ENCODE measurements at regions of chr16 and their contacts with region 1.

Region 1: GRCh38 chr16:52843381-52843780 is 209.3 kb downstream of the CHD9NB start:
- DNase-seq: no peak
- ATAC-seq: no peak
- H3K4me3 ChIP-seq: no peak overlapping the region
- H3K27ac ChIP-seq: no peak overlapping the region
- H3K4me1 ChIP-seq: no peaks in the 10 kb centered on the region
- H3K27me3 ChIP-seq: no peaks in the 10 kb centered on the region
- CTCF ChIP-seq: no peak

Region 2: DNA sequence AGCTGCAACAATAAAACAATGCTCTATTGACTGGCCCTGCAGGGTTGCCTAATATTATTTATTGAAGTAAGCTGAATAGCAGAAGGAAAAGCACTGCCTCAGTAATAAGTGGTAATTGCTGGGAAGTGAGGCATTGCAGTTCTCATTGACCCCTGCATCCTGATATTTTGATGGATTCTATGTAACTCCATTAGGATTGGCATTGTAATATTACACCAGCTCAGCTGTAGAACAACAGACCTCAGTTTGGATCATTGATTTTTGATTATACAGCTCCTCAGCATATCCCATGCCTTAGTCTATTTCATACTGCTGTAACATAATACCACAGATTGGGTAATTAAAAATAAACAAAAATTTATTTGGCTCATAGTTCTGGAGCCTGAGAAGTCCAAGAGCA is 1041.7 kb before region 1 on chr16:
- intact Hi-C with region 1: loop called in 1 of 2 experiments (anchors 5 kb)
- DNase-seq: no peak
- ATAC-seq: no peak
- H3K4me3 ChIP-seq: no peak overlapping the region
- H3K27ac ChIP-seq: no peak overlapping the region
- H3K4me1 ChIP-seq: no peaks in the 10 kb centered on the region
- H3K27me3 ChIP-seq: peaks cover 0 to 2% (median 0%) of the 10 kb centered on the region in 3 donors
- CTCF ChIP-seq: no peak

Measured in psoas muscle (tissue), 8 donors.